Activated CD4-positive, alpha-beta memory T cell treated with anti-CD3 and anti-CD28 coated beads for 36 hours (primary cell): ENCODE measurements at regions of chr15 and their contacts with region 1.

Region 1: DNA sequence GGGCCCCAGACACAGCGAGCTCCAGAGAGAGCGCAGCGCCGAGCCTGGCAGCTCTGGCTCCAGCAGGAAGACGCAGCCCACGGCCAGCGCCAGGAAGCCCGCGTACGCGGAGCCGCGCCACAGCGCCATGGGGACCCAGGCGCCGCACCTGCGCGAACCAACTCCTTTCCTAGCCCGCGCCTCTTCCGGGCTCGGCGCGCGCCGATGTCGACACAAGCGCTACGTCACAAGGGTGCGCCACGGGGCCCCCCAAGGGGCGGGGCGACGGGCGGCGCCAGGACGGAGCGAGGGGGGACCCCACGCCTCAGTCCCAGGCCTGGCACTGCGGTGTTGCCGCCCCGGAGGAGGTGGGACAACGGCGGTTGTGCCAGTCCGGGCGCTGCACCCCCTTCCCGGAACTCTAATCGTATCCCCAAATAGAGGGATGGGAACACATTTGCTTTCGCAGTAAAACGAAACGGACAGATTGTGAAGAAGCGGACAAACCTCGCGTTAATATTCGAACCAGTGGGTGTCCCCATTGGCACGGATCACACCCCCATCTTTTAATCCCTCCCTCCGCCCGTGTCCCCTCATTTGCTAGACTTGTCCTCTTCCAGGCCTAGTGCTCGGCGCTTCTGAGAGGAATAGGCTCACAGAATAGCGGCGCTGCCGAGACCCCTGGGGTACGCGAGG is at the start of gene ADPGK:
- DNase-seq: peak; percentile 95
- H3K4me3 Mint-ChIP-seq: peak within 1 kb of the TSS; percentile 85
- H3K27ac Mint-ChIP-seq: peak within 1 kb of the TSS; percentile 93
- H3K4me1 Mint-ChIP-seq: peaks cover 65% of the 10 kb centered on the region
- H3K27me3 Mint-ChIP-seq: no peaks in the 10 kb centered on the region
- total RNA-seq, gene ADPGK: 60.9 to 61.5 TPM

Region 2: GRCh38 chr15:72473614-72474465 is 309.9 kb before region 1 on chr15 and contains the start of gene ARIH1:
- CTCF ChIA-PET with region 1: no interaction called
- POLR2A ChIA-PET with region 1: no interaction called
- intact Hi-C with region 1: loop called (anchors 5 kb)
- DNase-seq: peak; percentile 96
- H3K4me3 Mint-ChIP-seq: peak within 1 kb of the TSS; percentile 92
- H3K27ac Mint-ChIP-seq: peak within 1 kb of the TSS; percentile 98
- H3K4me1 Mint-ChIP-seq: peaks cover 41% of the 10 kb centered on the region
- H3K27me3 Mint-ChIP-seq: no peaks in the 10 kb centered on the region
- total RNA-seq, gene ARIH1: 169 to 187 TPM

Region 3: DNA sequence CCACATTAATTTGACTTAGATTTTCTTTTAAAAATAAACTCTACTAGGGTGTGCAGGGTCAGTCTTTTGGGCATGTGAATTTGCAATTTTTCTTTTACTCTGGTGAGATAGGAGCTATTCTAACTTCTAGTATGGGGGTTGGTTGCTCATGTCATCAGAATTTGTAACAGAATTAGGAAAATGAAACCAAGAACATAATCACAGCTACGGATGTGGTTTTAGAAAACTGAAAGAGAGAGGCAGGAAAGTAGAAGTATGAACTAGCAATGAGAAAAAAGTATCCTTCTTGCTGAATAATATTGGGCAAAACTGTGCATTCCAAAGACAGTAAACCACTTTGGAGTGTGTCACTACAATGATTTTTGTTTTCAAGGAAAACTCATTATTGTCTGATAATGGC is 43.5 kb before region 1 on chr15:
- CTCF ChIA-PET with region 1: no interaction called
- POLR2A ChIA-PET with region 1: interaction called, 3 read pairs
- intact Hi-C with region 1: loop called (anchors 1 kb)
- DNase-seq: no peak
- H3K4me3 Mint-ChIP-seq: no peak overlapping the region
- H3K27ac Mint-ChIP-seq: peak overlapping the region; percentile 43
- H3K4me1 Mint-ChIP-seq: peaks cover 35% of the 10 kb centered on the region
- H3K27me3 Mint-ChIP-seq: no peaks in the 10 kb centered on the region

Region 4: DNA sequence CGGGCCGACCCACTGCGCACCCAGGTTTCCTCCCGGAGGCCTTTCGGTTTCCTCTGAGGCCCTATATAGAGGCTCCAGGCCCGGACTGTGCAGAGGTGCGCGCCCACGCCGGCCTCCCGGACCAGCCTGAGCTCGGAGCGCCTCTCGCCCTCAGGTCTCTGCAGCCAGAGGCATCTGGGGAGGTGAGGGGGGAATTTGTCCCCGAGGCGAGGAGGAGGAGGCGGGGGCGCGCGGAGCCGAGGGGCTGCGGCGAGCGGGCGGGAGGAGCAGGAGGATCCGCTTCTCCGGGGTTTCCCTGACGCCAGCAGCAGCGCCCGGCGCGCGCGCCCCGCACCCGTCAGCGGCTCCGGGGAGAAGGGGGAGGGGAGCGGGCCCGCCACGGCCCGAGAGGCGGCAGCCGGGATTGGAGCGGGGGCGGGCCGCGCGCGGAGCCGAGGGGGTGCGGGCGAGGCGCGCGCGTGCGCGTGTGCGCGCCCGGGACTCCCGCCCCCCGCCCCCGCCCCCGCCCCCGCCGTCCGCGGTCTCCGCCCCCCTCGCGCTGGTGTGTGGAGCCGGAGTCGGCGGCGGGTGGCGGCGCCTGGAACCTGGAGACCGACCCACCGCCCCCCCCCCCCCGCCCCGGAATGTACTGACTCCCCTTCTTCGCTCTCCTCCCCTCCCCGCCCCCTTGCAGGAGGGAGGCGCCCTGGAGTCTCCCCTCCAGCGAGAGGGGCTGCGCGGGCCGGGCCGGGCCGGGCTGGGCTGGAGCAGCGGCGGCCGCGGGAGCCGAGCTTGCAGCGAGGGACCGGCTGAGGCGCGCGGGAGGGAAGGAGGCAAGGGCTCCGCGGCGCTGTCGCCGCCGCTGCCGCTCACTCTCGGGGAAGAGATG is 268.3 kb after region 1 on chr15 and contains the start of gene NEO1:
- CTCF ChIA-PET with region 1: interaction called, 4 read pairs
- POLR2A ChIA-PET with region 1: no interaction called
- intact Hi-C with region 1: loop called (anchors 1 kb)
- DNase-seq: peak; percentile 84
- H3K4me3 Mint-ChIP-seq: peak within 1 kb of the TSS; percentile 78
- H3K27ac Mint-ChIP-seq: no peak within 1 kb of the TSS
- H3K4me1 Mint-ChIP-seq: peaks cover 7% of the 10 kb centered on the region
- H3K27me3 Mint-ChIP-seq: peaks cover 7% of the 10 kb centered on the region
- total RNA-seq, gene NEO1: 8.3 to 9.3 TPM

Region 5: GRCh38 chr15:73142802-73143762 is 359.4 kb after region 1 on chr15:
- CTCF ChIA-PET with region 1: no interaction called
- POLR2A ChIA-PET with region 1: interaction called, 3 read pairs
- intact Hi-C with region 1: loop called (anchors 2 kb)
- DNase-seq: no peak
- H3K4me3 Mint-ChIP-seq: no peak overlapping the region
- H3K27ac Mint-ChIP-seq: peak overlapping the region; percentile 91
- H3K4me1 Mint-ChIP-seq: peaks cover 45% of the 10 kb centered on the region
- H3K27me3 Mint-ChIP-seq: no peaks in the 10 kb centered on the region

Region 6: DNA sequence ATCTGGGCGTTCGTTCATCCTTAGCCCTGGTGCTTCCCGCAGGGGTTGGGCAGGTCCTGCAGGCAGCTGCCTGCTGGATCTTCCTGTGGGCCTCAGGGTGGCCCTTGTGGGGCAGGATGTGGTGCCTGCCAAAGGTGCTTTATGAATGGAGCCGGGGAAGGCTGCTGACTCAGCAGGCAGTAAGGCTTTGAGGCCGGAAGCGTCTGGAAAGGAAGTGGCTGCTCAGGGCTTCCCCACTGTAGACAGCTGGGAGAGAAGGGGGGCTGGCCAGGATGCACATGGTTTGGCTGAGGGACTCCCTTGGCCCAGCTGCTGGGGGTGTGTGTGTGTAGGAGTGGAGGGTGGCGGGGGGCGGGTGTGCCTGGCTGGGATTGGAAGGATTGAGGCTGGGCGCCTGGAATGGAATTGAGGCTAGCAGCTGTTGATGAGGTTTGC is 913.4 kb after region 1 on chr15:
- CTCF ChIA-PET with region 1: no interaction called
- POLR2A ChIA-PET with region 1: no interaction called
- intact Hi-C with region 1: loop called (anchors 10 kb)
- DNase-seq: peak; percentile 92
- H3K4me3 Mint-ChIP-seq: peak overlapping the region; percentile 30
- H3K27ac Mint-ChIP-seq: peak overlapping the region; percentile 36
- H3K4me1 Mint-ChIP-seq: peaks cover 31% of the 10 kb centered on the region
- H3K27me3 Mint-ChIP-seq: peaks cover 53% of the 10 kb centered on the region